Activated naive CD4-positive, alpha-beta T cell treated with anti-CD3 and anti-CD28 coated beads for 36 hours (primary cell): ENCODE measurements at regions of chr20 and their contacts with region 1.

Region 1: GRCh38 chr20:31605031-31605901 is at the start of gene ID1:
- DNase-seq: peak; percentile 89
- H3K4me3 Mint-ChIP-seq: peak within 1 kb of the TSS; percentile 85
- H3K27ac Mint-ChIP-seq: no peak within 1 kb of the TSS
- H3K4me1 Mint-ChIP-seq: peaks cover 26% of the 10 kb centered on the region
- H3K27me3 Mint-ChIP-seq: peaks cover 48% of the 10 kb centered on the region
- total RNA-seq, gene ID1: 1.8 to 2.4 TPM

Region 2: DNA sequence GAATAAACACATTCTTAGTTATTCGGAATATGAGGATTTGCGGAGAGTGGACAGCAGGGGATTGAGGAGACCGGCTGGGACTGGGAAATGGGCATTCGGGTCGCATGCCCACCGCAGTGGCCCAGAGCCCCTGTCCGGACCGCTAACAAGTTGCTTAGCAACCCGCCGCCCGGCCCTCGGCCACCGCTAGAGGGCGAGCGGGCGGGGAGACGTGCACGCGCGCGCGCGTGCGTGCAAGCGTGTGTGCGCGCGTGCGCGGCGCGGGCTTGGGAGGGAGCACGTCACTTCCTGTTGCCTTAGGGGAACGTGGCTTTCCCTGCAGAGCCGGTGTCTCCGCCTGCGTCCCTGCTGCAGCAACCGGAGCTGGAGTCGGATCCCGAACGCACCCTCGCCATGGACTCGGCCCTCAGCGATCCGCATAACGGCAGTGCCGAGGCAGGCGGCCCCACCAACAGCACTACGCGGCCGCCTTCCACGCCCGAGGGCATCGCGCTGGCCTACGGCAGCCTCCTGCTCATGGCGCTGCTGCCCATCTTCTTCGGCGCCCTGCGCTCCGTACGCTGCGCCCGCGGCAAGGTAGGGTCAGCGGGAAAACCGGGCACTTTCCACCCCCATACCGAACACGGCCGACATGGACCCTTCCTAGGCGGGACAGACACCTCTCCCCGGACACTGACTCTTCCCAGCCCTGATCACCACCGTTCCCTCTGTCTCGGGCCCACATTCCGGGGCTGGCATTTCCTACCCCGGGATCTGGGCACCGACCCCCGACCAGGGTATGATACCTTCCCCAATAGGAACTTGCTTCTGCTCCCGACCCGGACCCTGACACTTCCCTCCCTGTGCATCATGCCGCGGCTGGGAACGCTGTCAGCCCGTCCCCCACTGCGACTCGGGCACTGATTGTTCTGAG is 90.9 kb before region 1 on chr20 and contains the start of gene HM13:
- CTCF ChIA-PET with region 1: no interaction called
- intact Hi-C with region 1: loop called (anchors 2 kb)
- DNase-seq: peak; percentile 89
- H3K4me3 Mint-ChIP-seq: no peak within 1 kb of the TSS
- H3K27ac Mint-ChIP-seq: peak within 1 kb of the TSS; percentile 1
- H3K4me1 Mint-ChIP-seq: peaks cover 9% of the 10 kb centered on the region
- H3K27me3 Mint-ChIP-seq: no peaks in the 10 kb centered on the region
- total RNA-seq, gene HM13: 67.3 to 69.4 TPM

Region 3: DNA sequence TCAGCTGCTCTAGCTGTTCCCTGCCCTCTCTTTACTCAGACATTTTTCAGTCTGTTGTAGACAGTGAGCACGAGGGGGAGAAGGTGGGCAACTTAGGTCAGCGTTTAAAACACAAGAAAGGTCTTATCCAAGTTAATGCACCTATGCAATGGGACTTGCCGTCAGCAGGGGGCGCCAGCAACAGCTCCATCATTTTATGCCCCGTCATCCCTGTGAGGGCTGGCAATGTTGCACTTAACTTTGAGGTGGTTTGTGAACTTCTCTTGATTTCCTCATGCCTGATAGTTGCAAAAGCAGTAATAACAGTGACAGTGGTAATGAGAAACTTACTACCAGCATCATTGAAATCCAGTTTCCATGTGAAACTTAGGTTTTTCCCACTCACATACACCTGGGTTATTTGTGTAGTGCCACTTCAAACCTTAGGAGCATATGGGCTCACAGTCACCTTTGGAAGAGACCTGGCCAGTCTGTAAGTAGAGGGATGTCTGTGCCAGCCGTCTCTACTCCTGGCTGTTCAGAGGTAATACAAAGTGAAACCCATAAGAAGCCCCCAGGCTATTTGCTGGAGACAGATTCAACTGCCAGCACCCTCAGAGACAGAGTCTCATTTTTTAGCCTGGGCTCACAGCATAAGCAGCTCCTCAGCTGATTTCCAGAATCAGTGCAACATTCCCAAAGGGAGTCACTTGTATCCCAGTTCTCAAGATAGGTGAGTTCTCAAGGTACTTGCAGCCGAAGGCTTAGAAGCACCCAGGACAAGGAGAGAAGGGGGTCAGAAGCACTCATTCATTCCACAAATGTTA is 45.0 kb before region 1 on chr20:
- CTCF ChIA-PET with region 1: interaction called, 330 read pairs
- intact Hi-C with region 1: no loop called
- DNase-seq: peak; percentile 92
- H3K4me3 Mint-ChIP-seq: no peak overlapping the region
- H3K27ac Mint-ChIP-seq: peak overlapping the region; percentile 61
- H3K4me1 Mint-ChIP-seq: peaks cover 13% of the 10 kb centered on the region
- H3K27me3 Mint-ChIP-seq: no peaks in the 10 kb centered on the region

Region 4: DNA sequence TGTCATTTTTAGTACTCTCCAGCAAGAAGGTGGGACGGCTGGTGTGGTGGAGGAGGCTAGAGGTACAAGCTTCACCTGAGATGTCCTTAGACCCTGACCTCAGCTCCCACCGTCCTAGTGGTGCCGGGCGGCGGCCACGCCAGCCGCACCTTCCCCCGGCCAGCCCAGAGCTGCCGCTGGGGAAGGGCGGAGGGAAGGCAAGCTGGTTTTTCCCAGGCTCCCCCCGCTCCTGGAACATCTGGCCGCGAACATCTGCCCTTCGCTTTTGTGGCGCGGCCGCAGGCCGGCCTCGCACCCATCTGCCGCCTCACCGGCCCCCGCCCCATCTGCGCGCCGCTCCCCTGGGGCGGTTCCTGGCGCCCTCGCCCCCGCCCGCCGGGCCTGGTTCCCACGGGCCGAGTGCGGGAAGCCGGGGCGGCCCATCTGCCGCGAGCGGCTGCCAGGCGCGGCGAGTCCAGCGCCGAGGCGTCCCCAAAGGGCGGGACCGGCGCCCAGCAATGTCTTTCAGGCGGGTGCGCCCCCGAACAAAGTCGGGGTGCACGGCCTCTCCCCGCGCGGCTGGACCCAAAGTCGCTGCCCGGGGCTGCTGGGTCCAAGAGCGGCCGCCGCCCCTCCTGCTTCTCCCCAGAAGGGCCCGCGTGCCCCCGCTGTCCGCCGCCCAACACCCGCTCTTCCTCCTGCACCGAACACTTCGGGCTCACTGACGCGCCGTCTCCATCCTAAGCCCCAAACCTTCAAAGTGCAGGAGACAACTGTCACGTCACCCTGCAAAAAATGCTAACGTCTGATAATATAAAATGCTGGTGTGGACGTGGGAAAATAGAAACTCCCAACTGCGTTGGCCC is 17.5 kb before region 1 on chr20:
- CTCF ChIA-PET with region 1: interaction called, 5 read pairs
- intact Hi-C with region 1: loop called (anchors 2 kb)
- DNase-seq: no peak
- H3K4me3 Mint-ChIP-seq: peak overlapping the region; percentile 55
- H3K27ac Mint-ChIP-seq: no peak overlapping the region
- H3K4me1 Mint-ChIP-seq: peaks cover 8% of the 10 kb centered on the region
- H3K27me3 Mint-ChIP-seq: peaks cover 25% of the 10 kb centered on the region

Region 5: GRCh38 chr20:31593225-31594002 is 11.9 kb before region 1 on chr20:
- CTCF ChIA-PET with region 1: interaction called, 5 read pairs
- intact Hi-C with region 1: loop called (anchors 1 kb)
- DNase-seq: peak; percentile 74
- H3K4me3 Mint-ChIP-seq: no peak overlapping the region
- H3K27ac Mint-ChIP-seq: no peak overlapping the region
- H3K4me1 Mint-ChIP-seq: peaks cover under 1% of the 10 kb centered on the region
- H3K27me3 Mint-ChIP-seq: peaks cover 6% of the 10 kb centered on the region

Region 6: GRCh38 chr20:31747640-31748039 is 142.4 kb after region 1 on chr20:
- CTCF ChIA-PET with region 1: no interaction called
- intact Hi-C with region 1: no loop called
- DNase-seq: no peak
- H3K4me3 Mint-ChIP-seq: no peak overlapping the region
- H3K27ac Mint-ChIP-seq: no peak overlapping the region
- H3K4me1 Mint-ChIP-seq: no peaks in the 10 kb centered on the region
- H3K27me3 Mint-ChIP-seq: no peaks in the 10 kb centered on the region

Region 7: GRCh38 chr20:31760519-31761240 is 155.4 kb after region 1 on chr20:
- CTCF ChIA-PET with region 1: no interaction called
- intact Hi-C with region 1: no loop called
- DNase-seq: no peak
- H3K4me3 Mint-ChIP-seq: no peak overlapping the region
- H3K27ac Mint-ChIP-seq: no peak overlapping the region
- H3K4me1 Mint-ChIP-seq: no peaks in the 10 kb centered on the region
- H3K27me3 Mint-ChIP-seq: no peaks in the 10 kb centered on the region